Activated naive CD4-positive, alpha-beta T cell treated with anti-CD3 and anti-CD28 coated beads for 36 hours (primary cell): ENCODE measurements at regions of chr3 and their contacts with region 1.

Region 1: DNA sequence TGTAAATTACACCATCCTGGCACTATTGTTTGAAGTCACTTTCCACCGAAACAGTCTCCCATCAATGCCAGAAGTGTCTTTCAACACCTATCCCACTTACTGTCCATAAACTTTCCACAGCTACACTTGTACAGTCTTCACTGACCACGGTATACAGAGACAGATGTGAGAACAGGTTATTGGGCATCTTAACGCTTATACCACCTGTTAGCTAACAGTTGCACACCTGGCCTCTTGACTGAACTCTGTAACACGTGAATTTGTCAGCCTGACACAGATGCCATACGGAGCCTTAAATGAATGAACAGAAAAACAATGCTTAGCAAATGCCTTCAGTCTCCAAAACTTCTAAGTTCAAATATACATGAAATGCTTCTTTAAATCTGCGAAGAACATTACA is 440.5 kb downstream of the SHQ1 start:
- DNase-seq: no peak
- H3K4me3 Mint-ChIP-seq: no peak overlapping the region
- H3K27ac Mint-ChIP-seq: no peak overlapping the region
- H3K4me1 Mint-ChIP-seq: peaks cover 85% of the 10 kb centered on the region
- H3K27me3 Mint-ChIP-seq: no peaks in the 10 kb centered on the region

Region 2: DNA sequence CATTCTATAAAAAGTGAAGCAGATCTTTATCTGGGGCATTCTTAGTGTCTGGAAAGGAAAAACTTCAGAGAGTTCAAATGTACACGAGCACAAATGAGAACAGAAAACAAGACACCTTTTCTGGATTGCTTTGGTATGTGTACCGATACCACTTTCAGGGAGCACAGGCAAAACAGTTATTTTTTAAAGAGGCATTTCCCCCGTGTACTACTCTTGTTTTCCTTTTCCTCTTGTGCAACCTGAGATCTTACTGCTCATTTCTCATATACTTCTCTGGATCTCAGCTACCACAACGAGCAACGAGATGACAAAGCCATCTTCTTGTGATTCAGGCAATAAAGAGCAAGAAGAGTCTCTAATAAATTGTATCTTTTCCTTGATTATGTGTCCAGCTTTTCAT is 23.2 kb before region 1 on chr3:
- CTCF ChIA-PET with region 1: no interaction called
- intact Hi-C with region 1: loop called (anchors 2 kb)
- DNase-seq: peak; percentile 20
- H3K4me3 Mint-ChIP-seq: no peak overlapping the region
- H3K27ac Mint-ChIP-seq: no peak overlapping the region
- H3K4me1 Mint-ChIP-seq: peaks cover 87% of the 10 kb centered on the region
- H3K27me3 Mint-ChIP-seq: no peaks in the 10 kb centered on the region